ENCODE measurements at regions of chr20 and their contacts with region 1.

Region 1: DNA sequence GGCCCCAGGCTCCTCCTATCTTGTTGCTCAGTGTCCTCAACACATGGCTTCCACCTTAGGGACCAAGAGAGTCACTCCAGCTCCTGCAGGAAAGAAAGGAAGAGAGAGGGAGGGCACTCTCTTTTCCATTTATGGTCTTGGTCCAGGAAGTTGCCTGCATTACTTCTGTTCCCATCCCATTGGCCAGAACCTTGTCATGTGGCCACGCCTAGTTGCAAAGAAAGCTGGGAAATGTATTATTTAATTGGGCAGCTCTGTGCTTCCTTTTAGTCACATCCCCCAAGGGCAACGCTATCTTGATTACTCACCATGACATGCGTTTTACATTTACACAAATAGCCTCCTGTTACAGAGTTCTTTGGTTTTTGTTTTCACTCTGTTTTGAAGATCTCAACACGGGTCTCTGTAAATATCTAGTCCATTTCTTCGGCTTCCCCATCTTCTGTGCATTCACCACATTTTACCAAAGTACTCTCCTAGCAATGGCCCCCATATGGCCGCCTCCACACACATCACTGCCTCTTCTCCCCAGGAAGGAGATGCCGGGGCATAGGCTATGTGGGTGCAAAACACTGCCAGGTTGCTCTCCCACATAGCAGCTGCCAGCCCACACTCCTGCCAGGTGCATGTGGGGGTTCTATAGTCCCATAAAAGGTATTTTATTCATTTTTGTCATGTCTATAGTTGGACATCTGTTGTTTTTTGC is 35.7 kb upstream of the ZMYND8 start:
- DNase-seq: no peak
- H3K4me3 ChIP-seq: peak overlapping the region in 1 of 4 donors; percentile 26
- H3K27ac ChIP-seq: peak overlapping the region; percentile 82 to 88 (median 86)
- H3K4me1 ChIP-seq: peaks cover 4 to 12% (median 7%) of the 10 kb centered on the region in 3 donors
- H3K27me3 ChIP-seq: no peaks in the 10 kb centered on the region
- CTCF ChIP-seq: no peak
- POLR2A ChIP-seq: no peak

Region 2: GRCh38 chr20:47544240-47544639 is 152.1 kb after region 1 on chr20:
- intact Hi-C with region 1: no loop called
- DNase-seq: no peak
- H3K4me3 ChIP-seq: no peak overlapping the region
- H3K27ac ChIP-seq: no peak overlapping the region
- H3K4me1 ChIP-seq: peaks cover 0 to 57% (median 14%) of the 10 kb centered on the region in 3 donors
- H3K27me3 ChIP-seq: no peaks in the 10 kb centered on the region
- CTCF ChIP-seq: no peak
- POLR2A ChIP-seq: no peak

Region 3: DNA sequence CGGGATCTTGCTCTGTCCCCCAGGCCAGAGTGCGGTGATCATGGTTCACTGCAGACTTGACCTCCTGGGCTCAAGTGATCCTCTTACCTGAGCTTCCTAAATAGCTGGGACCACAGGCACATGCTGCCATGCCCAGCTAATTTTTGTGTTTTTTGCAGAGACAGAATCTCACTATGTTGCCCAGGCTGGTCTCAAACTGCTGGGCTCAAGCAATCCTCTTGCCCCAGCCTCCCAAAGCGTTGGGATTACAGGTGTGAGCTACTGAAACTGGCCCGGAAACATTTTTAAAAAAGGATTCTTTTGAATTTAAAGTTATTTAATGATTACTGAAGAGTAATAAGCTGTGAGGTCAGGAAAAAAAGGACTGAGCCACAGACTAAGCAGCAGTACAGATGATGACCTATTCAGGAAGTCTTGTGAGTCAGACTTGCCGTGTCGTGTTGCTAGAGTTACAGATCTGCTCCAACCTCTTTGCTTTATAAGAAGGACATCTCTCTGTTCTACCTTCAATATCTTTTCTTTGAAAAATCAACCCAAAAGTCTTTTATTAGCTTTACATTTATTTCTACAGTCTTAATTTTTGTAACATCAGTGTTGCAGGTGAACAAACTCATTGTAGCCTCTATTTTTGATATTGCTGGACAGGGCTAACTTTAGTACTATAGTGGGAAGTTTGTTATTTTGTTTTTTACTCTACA is 218.2 kb after region 1 on chr20:
- intact Hi-C with region 1: loop called (anchors 10 kb)
- DNase-seq: no peak
- H3K4me3 ChIP-seq: no peak overlapping the region
- H3K27ac ChIP-seq: peak overlapping the region in 3 of 4 donors; percentile 42 to 47 (median 43)
- H3K4me1 ChIP-seq: peaks cover 0 to 19% (median 10%) of the 10 kb centered on the region in 3 donors
- H3K27me3 ChIP-seq: no peaks in the 10 kb centered on the region
- CTCF ChIP-seq: no peak
- POLR2A ChIP-seq: no peak

Measured in esophagus squamous epithelium (tissue), 5 donors.